Activated T-helper 1 cell treated with anti-CD3 and anti-CD28 coated beads, Interleukin-12 subunit alpha, Interleukin-12 subunit beta, Interleukin-2, Interleukin-4 antibody, amounts not matched to agents 30 ng/mL and 10 ng/mL and 1 ng/mL, durations not matched to agents 14 hours and 24 hours and 36 hours (primary cell): ENCODE measurements at regions of chr17 and their contacts with region 1.

Region 1: GRCh38 chr17:77444984-77445759 is 304.4 kb downstream of the SEC14L1 start:
- DNase-seq: peak; percentile 80
- H3K4me3 Mint-ChIP-seq: peak overlapping the region; percentile 79
- H3K27ac Mint-ChIP-seq: peak overlapping the region; percentile 97
- H3K4me1 Mint-ChIP-seq: peaks cover 85% of the 10 kb centered on the region
- H3K27me3 Mint-ChIP-seq: no peaks in the 10 kb centered on the region

Region 2: GRCh38 chr17:76997981-76998531 is 447.1 kb before region 1 on chr17:
- intact Hi-C with region 1: loop called (anchors 5 kb)
- DNase-seq: peak; percentile 73
- H3K4me3 Mint-ChIP-seq: peak overlapping the region; percentile 57
- H3K27ac Mint-ChIP-seq: peak overlapping the region; percentile 96
- H3K4me1 Mint-ChIP-seq: peaks cover 47% of the 10 kb centered on the region
- H3K27me3 Mint-ChIP-seq: no peaks in the 10 kb centered on the region

Region 3: GRCh38 chr17:77345260-77345910 is 99.8 kb before region 1 on chr17:
- intact Hi-C with region 1: no loop called
- DNase-seq: no peak
- H3K4me3 Mint-ChIP-seq: no peak overlapping the region
- H3K27ac Mint-ChIP-seq: no peak overlapping the region
- H3K4me1 Mint-ChIP-seq: peaks cover 45% of the 10 kb centered on the region
- H3K27me3 Mint-ChIP-seq: peaks cover under 1% of the 10 kb centered on the region

Region 4: DNA sequence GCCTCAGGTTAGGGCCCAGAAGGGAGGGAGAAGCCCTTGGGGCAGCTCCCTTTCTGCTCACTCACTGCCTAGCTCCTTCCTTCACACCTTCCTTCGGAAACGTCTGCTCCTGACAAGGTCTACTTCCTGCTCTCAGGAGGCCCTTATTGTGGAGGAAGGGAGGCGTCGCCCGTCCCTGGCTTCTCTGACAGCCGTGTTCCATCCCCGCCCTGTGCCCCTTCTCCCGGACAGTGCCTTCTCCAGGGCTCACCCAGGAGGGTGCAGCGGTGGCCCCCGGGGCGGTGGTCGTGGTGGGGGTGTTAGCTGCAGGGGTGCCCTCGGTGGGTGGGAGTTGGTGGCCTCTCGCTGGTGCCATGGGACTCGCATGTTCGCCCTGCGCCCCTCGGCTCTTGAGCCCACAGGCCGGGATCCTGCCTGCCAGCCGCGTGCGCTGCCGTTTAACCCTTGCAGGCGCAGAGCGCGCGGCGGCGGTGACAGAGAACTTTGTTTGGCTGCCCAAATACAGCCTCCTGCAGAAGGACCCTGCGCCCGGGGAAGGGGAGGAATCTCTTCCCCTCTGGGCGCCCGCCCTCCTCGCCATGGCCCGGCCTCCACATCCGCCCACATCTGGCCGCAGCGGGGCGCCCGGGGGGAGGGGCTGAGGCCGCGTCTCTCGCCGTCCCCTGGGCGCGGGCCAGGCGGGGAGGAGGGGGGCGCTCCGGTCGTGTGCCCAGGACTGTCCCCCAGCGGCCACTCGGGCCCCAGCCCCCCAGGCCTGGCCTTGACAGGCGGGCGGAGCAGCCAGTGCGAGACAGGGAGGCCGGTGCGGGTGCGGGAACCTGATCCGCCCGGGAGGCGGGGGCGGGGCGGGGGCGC is 72.5 kb before region 1 on chr17:
- intact Hi-C with region 1: loop called (anchors 2 kb)
- DNase-seq: peak; percentile 76
- H3K4me3 Mint-ChIP-seq: peak overlapping the region; percentile 76
- H3K27ac Mint-ChIP-seq: peak overlapping the region; percentile 68
- H3K4me1 Mint-ChIP-seq: peaks cover 57% of the 10 kb centered on the region
- H3K27me3 Mint-ChIP-seq: no peaks in the 10 kb centered on the region

Region 5: GRCh38 chr17:77465358-77466041 is 20.3 kb after region 1 on chr17:
- intact Hi-C with region 1: loop called (anchors 2 kb)
- DNase-seq: peak; percentile 72
- H3K4me3 Mint-ChIP-seq: peak overlapping the region; percentile 59
- H3K27ac Mint-ChIP-seq: peak overlapping the region; percentile 89
- H3K4me1 Mint-ChIP-seq: peaks cover 77% of the 10 kb centered on the region
- H3K27me3 Mint-ChIP-seq: no peaks in the 10 kb centered on the region

Region 6: GRCh38 chr17:77471984-77472461 is 26.9 kb after region 1 on chr17:
- intact Hi-C with region 1: loop called (anchors 1 kb)
- DNase-seq: no peak
- H3K4me3 Mint-ChIP-seq: peak overlapping the region; percentile 59
- H3K27ac Mint-ChIP-seq: peak overlapping the region; percentile 88
- H3K4me1 Mint-ChIP-seq: peaks cover 83% of the 10 kb centered on the region
- H3K27me3 Mint-ChIP-seq: no peaks in the 10 kb centered on the region